HEK293 (cell line): ENCODE measurements at regions of chr3 and their contacts with region 1.

Region 1: DNA sequence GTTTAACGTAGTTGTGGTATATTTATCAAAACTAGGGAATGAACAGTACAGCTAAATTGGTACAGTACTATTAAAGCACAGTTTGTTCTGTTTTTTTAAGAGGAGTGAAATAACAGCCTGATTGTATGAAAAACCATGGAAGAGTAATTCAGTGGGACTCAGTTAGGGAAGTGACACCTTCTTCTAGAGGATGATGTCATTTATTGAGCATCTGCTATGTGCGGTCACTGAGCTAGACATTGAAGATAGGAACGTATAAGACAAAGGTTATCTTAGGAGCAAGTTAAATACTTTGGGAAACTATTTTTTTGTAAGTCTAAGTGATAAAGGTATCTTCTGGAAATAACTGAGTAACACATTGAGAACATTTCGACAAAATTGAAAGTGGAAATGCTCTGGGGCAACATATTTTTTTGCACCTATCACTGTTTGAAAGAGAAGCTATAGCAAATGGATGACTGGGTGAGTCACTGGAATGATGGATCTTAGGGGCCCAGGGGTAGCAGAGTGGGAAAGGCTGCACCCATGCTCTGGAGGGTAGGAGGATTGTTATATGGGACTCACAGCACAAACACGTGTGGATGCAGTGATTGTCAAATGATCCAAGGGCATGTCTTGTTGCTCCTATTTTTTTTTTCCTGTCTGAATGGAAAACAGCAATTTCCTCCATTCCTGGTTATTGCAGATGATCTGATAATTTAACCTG is 43.0 kb downstream of the OXNAD1 start:
- H3K4me3 ChIP-seq: no peak overlapping the region
- H3K27ac ChIP-seq: no peak overlapping the region
- H3K4me1 ChIP-seq: no peaks in the 10 kb centered on the region
- CTCF ChIP-seq: no peak

Region 2: GRCh38 chr3:16319307-16319706 is 11.3 kb after region 1 on chr3:
- CTCF ChIA-PET with region 1: interaction called, 15 read pairs
- POLR2A ChIA-PET with region 1: no interaction called
- H3K4me3 ChIP-seq: no peak overlapping the region
- H3K27ac ChIP-seq: no peak overlapping the region
- H3K4me1 ChIP-seq: no peaks in the 10 kb centered on the region
- CTCF ChIP-seq: no peak